CD14-positive monocyte (primary cell): ENCODE measurements at regions of chr19 and their contacts with region 1.

Region 1: GRCh38 chr19:48872182-48872883 is at the start of gene PPP1R15A:
- DNase-seq: peak; percentile 98 to 99 (median 98)
- H3K4me3 ChIP-seq: peak within 1 kb of the TSS; percentile 83 to 100 (median 90)
- H3K4me3 Mint-ChIP-seq: peak within 1 kb of the TSS; percentile 98
- H3K27ac ChIP-seq: peak within 1 kb of the TSS; percentile 99 to 100
- H3K27ac Mint-ChIP-seq: peak within 1 kb of the TSS; percentile 99 to 100 (median 100)
- H3K4me1 ChIP-seq: peaks cover 42% of the 10 kb centered on the region in 2 donors
- H3K4me1 Mint-ChIP-seq: peaks cover 37% of the 10 kb centered on the region
- H3K27me3 ChIP-seq: no peaks in the 10 kb centered on the region
- H3K27me3 Mint-ChIP-seq: peaks cover 4 to 17% (median 6%) of the 10 kb centered on the region in 3 donors
- CTCF ChIP-seq: no peak
- polyA plus RNA-seq, gene PPP1R15A: 127 to 745 (median 169) TPM

Region 2: DNA sequence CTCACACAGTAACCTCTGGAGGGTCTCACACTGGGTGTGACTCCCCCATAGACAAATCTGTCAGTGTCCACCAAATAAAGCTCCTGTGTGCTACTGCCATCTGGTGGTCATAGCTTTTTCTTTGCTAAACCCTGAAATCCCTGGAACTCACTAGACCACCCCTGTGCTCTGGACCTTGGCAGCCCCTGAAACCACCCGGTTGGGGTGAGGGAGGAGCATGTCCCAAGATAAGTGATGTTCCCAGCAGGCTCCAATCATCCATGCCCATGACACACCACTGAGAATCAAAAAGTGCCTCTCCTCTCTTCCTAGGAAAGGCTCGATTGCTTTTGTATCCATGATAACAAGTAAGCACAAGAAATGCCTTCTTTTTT is 29.6 kb before region 1 on chr19:
- intact Hi-C with region 1: no loop called
- DNase-seq: peak; percentile 36 to 60 (median 53)
- H3K4me3 ChIP-seq: no peak overlapping the region
- H3K4me3 Mint-ChIP-seq: no peak overlapping the region
- H3K27ac ChIP-seq: no peak overlapping the region
- H3K27ac Mint-ChIP-seq: no peak overlapping the region
- H3K4me1 ChIP-seq: no peaks in the 10 kb centered on the region
- H3K4me1 Mint-ChIP-seq: peaks cover 2% of the 10 kb centered on the region
- H3K27me3 ChIP-seq: peaks cover 0 to under 1% of the 10 kb centered on the region in 2 donors
- H3K27me3 Mint-ChIP-seq: peaks cover 2 to 4% (median 3%) of the 10 kb centered on the region in 3 donors
- CTCF ChIP-seq: peak; percentile 77

Region 3: GRCh38 chr19:48965040-48965805 is 92.9 kb after region 1 on chr19 and contains the start of gene FTL:
- intact Hi-C with region 1: loop called (anchors 2 kb)
- DNase-seq: peak; percentile 98 to 99 (median 99)
- H3K4me3 ChIP-seq: peak within 1 kb of the TSS; percentile 86 to 99 (median 89)
- H3K4me3 Mint-ChIP-seq: peak within 1 kb of the TSS; percentile 99 to 100
- H3K27ac ChIP-seq: peak within 1 kb of the TSS; percentile 88 to 96
- H3K27ac Mint-ChIP-seq: peak within 1 kb of the TSS; percentile 95 to 99 (median 97)
- H3K4me1 ChIP-seq: peaks cover 74 to 81% of the 10 kb centered on the region in 2 donors
- H3K4me1 Mint-ChIP-seq: peaks cover 68% of the 10 kb centered on the region
- H3K27me3 ChIP-seq: no peaks in the 10 kb centered on the region
- H3K27me3 Mint-ChIP-seq: peaks cover 0 to 14% (median 0%) of the 10 kb centered on the region in 3 donors
- CTCF ChIP-seq: no peak
- polyA plus RNA-seq, gene FTL: 4,468 to 26,681 (median 23,650) TPM

Region 4: DNA sequence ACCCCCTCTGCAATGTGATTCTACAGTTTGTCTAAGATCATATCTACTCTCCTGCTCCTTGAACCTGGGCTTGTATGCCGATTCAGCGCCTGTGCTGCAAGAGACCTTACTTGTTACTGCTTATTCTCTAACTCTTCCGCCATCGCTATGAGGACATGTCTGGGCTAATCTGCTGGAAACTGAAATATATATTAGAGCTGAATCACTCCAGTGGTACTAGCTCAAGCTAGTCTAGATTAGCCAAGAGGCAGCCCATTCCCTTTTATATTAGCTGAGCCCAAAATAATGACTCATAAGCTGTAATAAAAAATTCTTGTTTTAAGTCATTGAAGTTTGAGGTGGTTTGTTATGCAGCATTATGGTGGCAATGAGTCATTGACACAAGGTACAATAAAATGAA is 399.9 kb after region 1 on chr19:
- intact Hi-C with region 1: no loop called
- DNase-seq: no peak
- H3K4me3 ChIP-seq: no peak overlapping the region
- H3K4me3 Mint-ChIP-seq: no peak overlapping the region
- H3K27ac ChIP-seq: no peak overlapping the region
- H3K27ac Mint-ChIP-seq: no peak overlapping the region
- H3K4me1 ChIP-seq: no peaks in the 10 kb centered on the region
- H3K4me1 Mint-ChIP-seq: no peaks in the 10 kb centered on the region
- H3K27me3 ChIP-seq: no peaks in the 10 kb centered on the region
- H3K27me3 Mint-ChIP-seq: peaks cover 9 to 14% (median 14%) of the 10 kb centered on the region in 3 donors
- CTCF ChIP-seq: no peak